Naive thymus-derived CD4-positive, alpha-beta T cell (primary cell): ENCODE measurements at regions of chr5 and their contacts with region 1.

Region 1: DNA sequence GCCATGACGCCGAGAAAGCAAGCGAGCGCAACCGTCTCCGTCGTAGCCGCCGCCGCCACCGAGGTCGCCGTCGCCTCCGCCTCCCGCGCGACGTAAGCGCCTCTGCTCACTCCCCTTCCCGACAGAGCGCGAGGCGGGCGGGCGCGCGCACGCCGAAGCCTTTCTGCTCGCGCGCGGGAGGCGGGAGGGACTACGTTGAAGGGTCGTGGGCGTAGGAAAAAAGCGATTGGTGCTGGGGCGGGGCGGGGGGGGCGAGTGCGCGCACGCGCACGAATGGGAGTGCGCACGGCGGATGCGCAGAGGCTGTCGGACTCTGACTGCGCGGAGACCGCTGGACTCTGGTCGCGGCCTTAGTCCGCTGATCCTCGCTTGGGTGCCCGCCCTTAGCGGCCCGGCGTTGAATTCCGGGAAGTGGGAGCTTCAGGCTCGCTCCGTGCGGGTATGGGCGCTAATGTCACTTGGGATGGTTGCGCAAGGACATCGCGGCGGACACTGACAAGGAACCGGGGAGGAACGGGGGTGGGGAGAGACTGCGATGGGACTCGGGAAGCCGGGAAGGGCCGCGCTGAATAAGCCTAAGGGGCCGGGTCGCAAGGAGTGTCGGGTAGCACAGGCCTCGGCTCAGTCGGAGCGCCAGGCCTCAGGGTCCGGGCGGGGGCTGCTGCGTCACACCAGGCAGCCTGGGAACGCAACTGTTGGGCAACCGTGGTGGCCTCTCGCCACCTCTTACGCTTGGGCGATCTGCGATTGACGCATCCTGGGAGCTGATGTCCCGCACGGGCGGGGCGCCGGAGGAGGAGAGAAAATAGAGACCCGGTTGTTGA is at the start of gene CHD1:
- DNase-seq: peak; percentile 91 to 98 (median 96)
- ATAC-seq: peak; percentile 83
- H3K4me3 ChIP-seq: peak within 1 kb of the TSS; percentile 96
- H3K4me3 Mint-ChIP-seq: peak within 1 kb of the TSS; percentile 93 to 99 (median 98)
- H3K27ac ChIP-seq: peak within 1 kb of the TSS; percentile 98
- H3K27ac Mint-ChIP-seq: peak within 1 kb of the TSS; percentile 94 to 100 (median 99)
- H3K4me1 ChIP-seq: peaks cover 42 to 44% of the 10 kb centered on the region in 2 donors
- H3K4me1 Mint-ChIP-seq: peaks cover 33 to 83% (median 70%) of the 10 kb centered on the region in 7 donors
- H3K27me3 ChIP-seq: no peaks in the 10 kb centered on the region
- H3K27me3 Mint-ChIP-seq: peaks cover 0 to 2% (median 0%) of the 10 kb centered on the region in 5 donors
- total RNA-seq, gene CHD1: 51.8 to 134 (median 92.4) TPM

Region 2: GRCh38 chr5:97078958-97079743 is 1849.9 kb before region 1 on chr5:
- CTCF ChIA-PET with region 1: no interaction called
- POLR2A ChIA-PET with region 1: no interaction called
- intact Hi-C with region 1: no loop called
- DNase-seq: no peak
- ATAC-seq: peak; percentile 66
- H3K4me3 ChIP-seq: no peak overlapping the region
- H3K4me3 Mint-ChIP-seq: no peak overlapping the region
- H3K27ac ChIP-seq: no peak overlapping the region
- H3K27ac Mint-ChIP-seq: peak overlapping the region in 1 of 9 donors; percentile 18
- H3K4me1 ChIP-seq: no peaks in the 10 kb centered on the region
- H3K4me1 Mint-ChIP-seq: peaks cover 7 to 19% (median 13%) of the 10 kb centered on the region in 7 donors
- H3K27me3 ChIP-seq: no peaks in the 10 kb centered on the region
- H3K27me3 Mint-ChIP-seq: peaks cover 0 to 33% (median 0%) of the 10 kb centered on the region in 5 donors

Region 3: DNA sequence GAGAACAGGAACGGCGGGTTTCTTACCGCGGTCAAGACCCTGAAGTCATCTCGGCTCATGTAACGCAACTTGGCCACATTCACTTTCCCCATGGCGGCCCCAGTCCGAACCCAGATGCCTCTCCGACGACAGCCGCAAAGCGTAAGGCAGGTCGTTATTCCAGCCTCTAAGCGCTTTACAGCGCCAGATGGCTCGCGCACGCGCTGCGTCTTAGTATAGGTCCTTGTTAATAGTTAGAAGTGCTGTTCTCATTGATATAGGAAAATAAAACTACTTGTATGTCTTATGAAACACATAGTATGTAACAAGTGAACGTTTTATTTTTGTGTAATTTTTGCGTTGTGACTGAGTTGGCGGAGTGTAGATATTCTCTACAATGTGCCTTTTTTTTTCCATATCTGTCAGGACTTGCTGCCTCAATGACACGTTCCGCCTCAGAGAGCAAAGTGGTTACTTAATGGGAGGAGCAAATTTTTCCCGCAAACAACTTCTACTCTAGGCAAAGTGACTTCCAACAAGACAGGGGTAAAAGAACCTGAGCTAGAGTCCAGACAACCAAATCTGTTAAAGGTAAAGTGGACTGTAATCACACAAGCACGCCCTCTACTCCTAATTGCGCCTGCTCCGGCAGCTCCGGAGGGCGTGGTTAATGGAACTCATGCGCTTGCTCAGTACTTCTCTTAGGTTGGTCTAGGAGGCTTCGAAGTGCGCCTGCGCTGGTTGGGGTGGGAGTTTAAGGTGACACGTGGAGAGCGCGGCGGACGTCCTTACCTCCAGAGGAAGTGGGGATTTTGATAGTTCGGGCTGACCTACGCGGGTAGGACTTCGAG is 1745.8 kb before region 1 on chr5 and contains the start of gene RIOK2:
- CTCF ChIA-PET with region 1: no interaction called
- POLR2A ChIA-PET with region 1: interaction called, 4 read pairs
- intact Hi-C with region 1: loop called (anchors 1 kb)
- DNase-seq: peak; percentile 77 to 93 (median 91)
- ATAC-seq: peak; percentile 96
- H3K4me3 ChIP-seq: peak within 1 kb of the TSS; percentile 82
- H3K4me3 Mint-ChIP-seq: peak within 1 kb of the TSS; percentile 89 to 98 (median 94)
- H3K27ac ChIP-seq: peak within 1 kb of the TSS; percentile 94
- H3K27ac Mint-ChIP-seq: peak within 1 kb of the TSS; percentile 99 to 100 (median 100)
- H3K4me1 ChIP-seq: peaks cover 4 to 14% of the 10 kb centered on the region in 2 donors
- H3K4me1 Mint-ChIP-seq: peaks cover 23 to 54% (median 44%) of the 10 kb centered on the region in 7 donors
- H3K27me3 ChIP-seq: no peaks in the 10 kb centered on the region
- H3K27me3 Mint-ChIP-seq: peaks cover 0 to 3% (median 0%) of the 10 kb centered on the region in 5 donors
- total RNA-seq, gene RIOK2: 18.8 to 36.0 (median 28.5) TPM

Region 4: GRCh38 chr5:98069876-98070512 is 859.1 kb before region 1 on chr5:
- CTCF ChIA-PET with region 1: no interaction called
- POLR2A ChIA-PET with region 1: no interaction called
- intact Hi-C with region 1: no loop called
- DNase-seq: no peak
- ATAC-seq: no peak
- H3K4me3 ChIP-seq: no peak overlapping the region
- H3K4me3 Mint-ChIP-seq: no peak overlapping the region
- H3K27ac ChIP-seq: no peak overlapping the region
- H3K27ac Mint-ChIP-seq: no peak overlapping the region
- H3K4me1 ChIP-seq: no peaks in the 10 kb centered on the region
- H3K4me1 Mint-ChIP-seq: peaks cover 0 to 4% (median 0%) of the 10 kb centered on the region in 7 donors
- H3K27me3 ChIP-seq: no peaks in the 10 kb centered on the region
- H3K27me3 Mint-ChIP-seq: peaks cover 0 to under 1% (median 0%) of the 10 kb centered on the region in 5 donors

Region 5: DNA sequence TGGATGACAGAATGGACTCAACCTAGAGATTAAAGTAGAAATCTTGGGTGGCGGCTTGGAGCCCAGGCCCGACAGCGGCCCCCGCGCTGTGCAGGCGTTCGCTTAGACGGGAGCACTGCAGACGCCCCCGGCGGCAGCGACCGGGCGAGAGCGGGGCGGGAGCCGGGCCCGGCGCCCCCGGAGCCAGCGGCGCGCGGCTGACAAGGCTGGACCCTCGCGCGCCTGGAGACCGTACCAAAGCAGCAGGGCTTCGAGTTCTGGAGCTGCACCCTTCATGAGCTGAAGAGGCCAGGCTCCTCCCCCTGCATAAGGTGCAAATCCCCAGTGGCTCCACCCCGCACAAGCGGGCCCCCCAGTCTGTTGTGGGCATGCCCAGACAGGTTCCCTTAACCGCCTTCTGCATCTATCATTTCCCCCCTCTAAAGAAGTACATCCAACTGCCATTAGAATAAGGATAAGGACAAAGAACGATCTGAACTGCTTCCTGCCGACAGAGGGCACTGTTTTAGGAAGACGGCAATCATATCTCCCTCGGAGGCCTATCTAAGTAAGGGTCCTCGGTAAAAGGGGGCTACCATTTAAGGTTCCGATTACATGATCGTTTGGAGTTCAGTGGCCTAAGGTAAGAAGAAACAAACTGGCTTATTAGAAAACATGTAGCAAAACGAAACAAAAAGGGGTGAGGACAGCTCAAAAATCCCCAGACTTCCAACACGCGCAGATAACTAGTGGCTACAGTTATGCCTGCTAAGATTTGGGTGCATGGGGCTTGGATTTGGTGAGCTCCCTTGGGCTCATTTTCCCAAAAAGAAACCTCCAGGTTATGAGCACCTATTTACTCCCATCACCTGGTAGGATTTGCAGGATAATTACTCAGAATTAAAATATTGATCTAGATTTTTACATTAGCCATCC is 89.4 kb before region 1 on chr5:
- CTCF ChIA-PET with region 1: no interaction called
- POLR2A ChIA-PET with region 1: no interaction called
- intact Hi-C with region 1: no loop called
- DNase-seq: no peak
- ATAC-seq: peak; percentile 69
- H3K4me3 ChIP-seq: no peak overlapping the region
- H3K4me3 Mint-ChIP-seq: peak overlapping the region; percentile 14 to 73 (median 50)
- H3K27ac ChIP-seq: no peak overlapping the region
- H3K27ac Mint-ChIP-seq: no peak overlapping the region
- H3K4me1 ChIP-seq: no peaks in the 10 kb centered on the region
- H3K4me1 Mint-ChIP-seq: peaks cover 0 to 7% (median 3%) of the 10 kb centered on the region in 7 donors
- H3K27me3 ChIP-seq: no peaks in the 10 kb centered on the region
- H3K27me3 Mint-ChIP-seq: peaks cover 0 to 3% (median 0%) of the 10 kb centered on the region in 5 donors

Region 6: DNA sequence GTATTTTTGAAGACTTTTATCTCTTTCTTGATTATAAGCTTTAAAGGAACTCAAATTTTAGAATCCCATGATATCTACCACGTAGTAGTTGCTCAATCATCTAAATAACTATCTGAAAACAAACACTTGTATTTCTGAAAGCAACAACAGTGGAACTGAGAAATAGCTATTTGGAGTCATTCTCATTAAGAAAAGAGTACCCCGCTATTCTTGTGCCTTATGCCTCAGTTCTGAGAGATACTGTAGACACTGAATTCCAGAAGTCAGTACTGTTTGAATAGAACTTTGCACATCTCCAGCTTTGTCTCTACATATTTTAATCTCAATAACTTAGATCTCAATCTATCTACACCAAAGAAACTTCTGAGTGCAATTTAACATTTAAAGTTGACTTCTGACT is 11.7 kb before region 1 on chr5:
- CTCF ChIA-PET with region 1: no interaction called
- POLR2A ChIA-PET with region 1: interaction called, 17 read pairs
- intact Hi-C with region 1: loop called in 1 of 2 experiments (anchors 1 kb)
- DNase-seq: no peak
- ATAC-seq: no peak
- H3K4me3 ChIP-seq: no peak overlapping the region
- H3K4me3 Mint-ChIP-seq: peak overlapping the region in 7 of 10 donors; percentile 12 to 63 (median 40)
- H3K27ac ChIP-seq: no peak overlapping the region
- H3K27ac Mint-ChIP-seq: peak overlapping the region in 4 of 9 donors; percentile 23 to 64 (median 46)
- H3K4me1 ChIP-seq: peaks cover 0 to 37% of the 10 kb centered on the region in 2 donors
- H3K4me1 Mint-ChIP-seq: peaks cover 57 to 91% (median 82%) of the 10 kb centered on the region in 7 donors
- H3K27me3 ChIP-seq: no peaks in the 10 kb centered on the region
- H3K27me3 Mint-ChIP-seq: no peaks in the 10 kb centered on the region

Region 7: DNA sequence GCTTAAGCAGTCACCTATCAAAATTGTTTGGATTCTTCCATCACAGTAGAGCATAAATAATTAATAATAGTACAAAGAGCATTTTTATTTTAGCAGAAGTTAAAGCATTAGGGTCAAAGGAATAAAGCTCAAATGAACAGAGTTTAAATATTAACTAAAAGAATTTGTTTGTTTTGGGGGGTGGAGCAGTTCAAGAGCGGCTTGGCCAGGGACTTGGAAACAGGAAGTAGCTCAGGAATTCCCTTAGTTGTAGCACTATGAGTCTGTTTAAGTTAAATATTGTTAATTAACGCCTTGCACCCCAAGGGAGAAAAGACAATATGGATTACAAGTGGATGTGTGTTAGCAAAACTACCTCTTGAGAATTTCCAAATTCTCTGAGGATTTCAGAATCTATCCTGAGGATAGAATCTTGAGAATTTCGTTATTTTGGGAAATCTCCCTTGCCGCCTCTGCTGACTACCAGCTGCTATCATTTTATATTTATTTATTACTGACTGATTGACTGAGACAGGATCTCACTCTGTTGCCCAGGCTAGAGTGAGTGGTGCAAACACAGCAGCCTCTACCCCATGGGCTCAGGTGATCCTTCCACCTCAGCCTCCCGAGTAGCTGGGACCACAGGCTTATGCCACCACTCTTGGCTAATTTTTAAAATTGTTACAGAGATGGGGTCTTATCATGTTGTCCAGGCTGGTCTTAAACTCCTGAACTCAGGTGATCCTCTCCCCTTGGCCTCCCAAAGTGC is 96.4 kb after region 1 on chr5:
- CTCF ChIA-PET with region 1: no interaction called
- POLR2A ChIA-PET with region 1: interaction called, 56 read pairs
- intact Hi-C with region 1: loop called in 1 of 2 experiments (anchors 1 kb)
- DNase-seq: no peak
- ATAC-seq: no peak
- H3K4me3 ChIP-seq: no peak overlapping the region
- H3K4me3 Mint-ChIP-seq: no peak overlapping the region
- H3K27ac ChIP-seq: no peak overlapping the region
- H3K27ac Mint-ChIP-seq: peak overlapping the region in 1 of 9 donors; percentile 83
- H3K4me1 ChIP-seq: peaks cover 5 to 11% of the 10 kb centered on the region in 2 donors
- H3K4me1 Mint-ChIP-seq: peaks cover 14 to 43% (median 36%) of the 10 kb centered on the region in 7 donors
- H3K27me3 ChIP-seq: no peaks in the 10 kb centered on the region
- H3K27me3 Mint-ChIP-seq: peaks cover 0 to 2% (median 0%) of the 10 kb centered on the region in 5 donors

Region 8: DNA sequence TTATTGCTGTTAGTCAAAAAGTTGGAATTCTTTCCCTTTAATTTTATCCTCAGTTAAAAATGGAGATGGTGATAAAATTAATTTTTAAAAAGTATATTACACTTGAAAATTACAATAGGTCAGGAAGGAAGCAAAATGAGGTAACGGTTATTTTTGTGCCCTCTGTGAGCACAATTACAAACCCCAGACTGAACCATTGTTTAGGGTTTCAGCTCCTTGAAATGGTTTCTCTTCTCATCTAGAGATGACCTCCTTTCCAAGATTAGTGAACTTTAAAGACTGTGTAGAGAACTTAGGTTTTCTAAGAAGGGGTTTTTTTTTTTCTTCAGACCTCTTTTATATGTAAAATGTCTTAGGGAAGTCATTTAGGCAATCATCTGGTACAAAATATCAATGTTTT is 125.9 kb after region 1 on chr5:
- CTCF ChIA-PET with region 1: interaction called, 11 read pairs
- POLR2A ChIA-PET with region 1: interaction called, 47 read pairs
- intact Hi-C with region 1: loop called (anchors 1 kb)
- DNase-seq: no peak
- ATAC-seq: no peak
- H3K4me3 ChIP-seq: no peak overlapping the region
- H3K4me3 Mint-ChIP-seq: no peak overlapping the region
- H3K27ac ChIP-seq: no peak overlapping the region
- H3K27ac Mint-ChIP-seq: peak overlapping the region in 5 of 9 donors; percentile 36 to 61 (median 53)
- H3K4me1 ChIP-seq: peaks cover 0 to 1% of the 10 kb centered on the region in 2 donors
- H3K4me1 Mint-ChIP-seq: peaks cover 0 to 26% (median 16%) of the 10 kb centered on the region in 7 donors
- H3K27me3 ChIP-seq: no peaks in the 10 kb centered on the region
- H3K27me3 Mint-ChIP-seq: peaks cover 0 to 12% (median 0%) of the 10 kb centered on the region in 5 donors

Region 9: GRCh38 chr5:99305045-99305580 is 376.0 kb after region 1 on chr5:
- CTCF ChIA-PET with region 1: no interaction called
- POLR2A ChIA-PET with region 1: no interaction called
- intact Hi-C with region 1: no loop called
- DNase-seq: no peak
- ATAC-seq: no peak
- H3K4me3 ChIP-seq: no peak overlapping the region
- H3K4me3 Mint-ChIP-seq: no peak overlapping the region
- H3K27ac ChIP-seq: no peak overlapping the region
- H3K27ac Mint-ChIP-seq: no peak overlapping the region
- H3K4me1 ChIP-seq: no peaks in the 10 kb centered on the region
- H3K4me1 Mint-ChIP-seq: no peaks in the 10 kb centered on the region
- H3K27me3 ChIP-seq: no peaks in the 10 kb centered on the region
- H3K27me3 Mint-ChIP-seq: no peaks in the 10 kb centered on the region

Region 10: GRCh38 chr5:100535060-100536005 is 1606.2 kb after region 1 on chr5 and contains the start of gene FAM174A:
- CTCF ChIA-PET with region 1: no interaction called
- POLR2A ChIA-PET with region 1: no interaction called
- intact Hi-C with region 1: loop called in 1 of 2 experiments (anchors 2 kb)
- DNase-seq: peak; percentile 88 to 96 (median 95)
- ATAC-seq: peak; percentile 91
- H3K4me3 ChIP-seq: peak within 1 kb of the TSS; percentile 88
- H3K4me3 Mint-ChIP-seq: peak within 1 kb of the TSS; percentile 84 to 100 (median 96)
- H3K27ac ChIP-seq: peak within 1 kb of the TSS; percentile 82
- H3K27ac Mint-ChIP-seq: peak within 1 kb of the TSS; percentile 81 to 100 (median 97)
- H3K4me1 ChIP-seq: peaks cover 10 to 11% of the 10 kb centered on the region in 2 donors
- H3K4me1 Mint-ChIP-seq: peaks cover 15 to 51% (median 33%) of the 10 kb centered on the region in 7 donors
- H3K27me3 ChIP-seq: no peaks in the 10 kb centered on the region
- H3K27me3 Mint-ChIP-seq: peaks cover 0 to 15% (median 0%) of the 10 kb centered on the region in 5 donors
- total RNA-seq, gene FAM174A: 4.6 to 10.7 (median 6.0) TPM